Ascending aorta (tissue), 2 donors: ENCODE measurements at regions of chr2 and their contacts with region 1.

Region 1: GRCh38 chr2:162261032-162261945 is 18.0 kb upstream of the FAP start:
- DNase-seq: peak; percentile 39 to 75
- H3K4me3 ChIP-seq: no peak overlapping the region
- H3K27ac ChIP-seq: peak overlapping the region; percentile 62 to 63
- H3K4me1 ChIP-seq: peaks cover 0 to 8% of the 10 kb centered on the region in 2 donors
- H3K27me3 ChIP-seq: no peaks in the 10 kb centered on the region
- CTCF ChIP-seq: no peak

Region 2: GRCh38 chr2:162221064-162221463 is 40.2 kb before region 1 on chr2:
- intact Hi-C with region 1: loop called (anchors 5 kb)
- DNase-seq: peak; percentile 28 to 88
- H3K4me3 ChIP-seq: no peak overlapping the region
- H3K27ac ChIP-seq: no peak overlapping the region
- H3K4me1 ChIP-seq: no peaks in the 10 kb centered on the region
- H3K27me3 ChIP-seq: no peaks in the 10 kb centered on the region
- CTCF ChIP-seq: peak; percentile 74 to 88 (median 85)

Region 3: DNA sequence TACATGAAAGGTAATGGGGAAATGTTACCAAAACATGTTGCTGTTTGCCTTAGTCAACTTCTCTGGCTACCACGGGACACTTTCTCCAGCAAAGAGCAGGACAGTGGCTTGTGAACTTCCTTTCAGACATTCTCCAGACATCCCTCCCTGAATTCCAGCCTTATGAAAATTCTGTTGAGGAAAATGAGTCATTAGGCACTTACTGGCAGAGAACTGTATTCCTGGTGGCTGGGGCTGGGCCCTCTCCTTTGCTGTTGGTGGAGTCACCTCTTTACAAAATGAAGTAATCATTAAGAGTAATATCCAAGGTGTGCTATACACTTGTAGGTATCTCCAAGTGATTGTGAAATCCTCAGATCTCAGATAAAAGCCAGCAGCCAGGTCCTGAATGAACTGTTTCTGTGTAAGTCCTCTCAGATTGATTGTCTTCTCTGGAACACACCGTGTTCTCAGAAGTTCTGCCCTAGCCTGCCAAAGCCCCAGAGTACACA is 16.7 kb before region 1 on chr2:
- intact Hi-C with region 1: loop called (anchors 2 kb)
- DNase-seq: peak in 1 of 2 donors; percentile 80
- H3K4me3 ChIP-seq: peak overlapping the region in 1 of 2 donors; percentile 56
- H3K27ac ChIP-seq: peak overlapping the region; percentile 74 to 75
- H3K4me1 ChIP-seq: peaks cover 3 to 22% of the 10 kb centered on the region in 2 donors
- H3K27me3 ChIP-seq: no peaks in the 10 kb centered on the region
- CTCF ChIP-seq: no peak

Region 4: DNA sequence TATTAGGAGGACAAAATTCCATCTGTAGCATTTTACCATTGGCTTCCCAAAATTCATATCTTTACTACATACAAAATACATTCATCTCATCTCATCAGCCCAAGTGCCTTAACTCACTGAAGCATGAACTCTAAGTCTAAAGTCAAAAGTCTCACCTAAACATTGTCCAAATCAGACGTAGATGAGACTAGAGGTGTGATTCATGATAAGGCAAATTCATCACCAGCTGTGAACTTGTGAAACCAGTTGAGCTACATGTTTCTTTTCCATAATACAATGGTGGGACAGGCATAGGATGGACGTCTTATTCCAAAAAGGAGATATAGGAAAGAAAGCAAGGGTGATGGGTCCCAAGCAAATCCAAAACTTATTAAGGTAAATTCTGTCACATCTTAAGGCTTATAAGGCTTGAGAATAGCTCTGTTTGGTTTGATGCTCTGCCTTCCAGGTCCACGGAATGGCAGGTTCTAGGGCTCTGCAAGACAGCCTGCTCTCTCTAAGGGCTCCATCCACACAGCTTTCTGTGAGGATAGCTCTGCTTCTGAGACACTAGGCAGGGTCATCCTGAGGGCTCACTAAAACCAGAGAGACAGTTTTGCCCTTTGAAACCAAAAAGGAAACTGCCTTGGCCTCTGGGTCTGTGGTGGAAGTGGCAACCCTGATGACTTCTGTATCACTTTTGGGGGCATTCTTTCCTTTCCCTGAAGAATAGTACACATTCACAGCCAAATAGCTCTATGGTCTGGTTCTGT is 47.6 kb after region 1 on chr2:
- intact Hi-C with region 1: no loop called
- DNase-seq: no peak
- H3K4me3 ChIP-seq: no peak overlapping the region
- H3K27ac ChIP-seq: no peak overlapping the region
- H3K4me1 ChIP-seq: no peaks in the 10 kb centered on the region
- H3K27me3 ChIP-seq: no peaks in the 10 kb centered on the region
- CTCF ChIP-seq: no peak

Region 5: DNA sequence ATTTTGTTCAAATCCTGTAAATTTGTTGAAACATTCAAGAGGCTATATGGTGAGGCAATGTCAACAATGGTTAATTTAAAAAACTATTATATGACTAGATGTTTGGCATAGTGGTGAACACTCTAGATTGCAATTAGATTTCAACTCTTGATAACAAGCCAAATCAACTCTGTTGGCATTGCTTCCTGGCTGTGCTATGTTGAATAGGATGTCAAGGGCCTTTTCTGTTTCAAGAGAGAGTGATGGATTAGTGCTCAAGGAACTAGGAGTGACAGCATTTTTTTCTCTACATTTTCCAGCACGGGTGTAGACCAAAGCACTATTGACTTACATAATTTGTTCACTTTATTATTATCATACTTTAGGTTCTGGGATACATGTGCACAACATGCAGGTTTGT is 749.7 kb after region 1 on chr2:
- intact Hi-C with region 1: no loop called
- DNase-seq: no peak
- H3K4me3 ChIP-seq: no peak overlapping the region
- H3K27ac ChIP-seq: no peak overlapping the region
- H3K4me1 ChIP-seq: no peaks in the 10 kb centered on the region
- H3K27me3 ChIP-seq: no peaks in the 10 kb centered on the region
- CTCF ChIP-seq: no peak